ENCODE measurements at regions of chr2 and their contacts with region 1.

Region 1: GRCh38 chr2:145356056-145356455 is 836.1 kb upstream of the ZEB2 start:
- DNase-seq: no peak
- H3K4me3 ChIP-seq: no peak overlapping the region
- H3K27ac ChIP-seq: no peak overlapping the region
- H3K4me1 ChIP-seq: no peaks in the 10 kb centered on the region
- H3K27me3 ChIP-seq: no peaks in the 10 kb centered on the region
- CTCF ChIP-seq: no peak

Region 2: GRCh38 chr2:144833075-144833637 is 522.9 kb before region 1 on chr2:
- CTCF ChIA-PET with region 1: interaction called, 11 read pairs
- POLR2A ChIA-PET with region 1: no interaction called
- intact Hi-C with region 1: no loop called
- DNase-seq: no peak
- H3K4me3 ChIP-seq: no peak overlapping the region
- H3K27ac ChIP-seq: no peak overlapping the region
- H3K4me1 ChIP-seq: peaks cover 13% of the 10 kb centered on the region
- H3K27me3 ChIP-seq: no peaks in the 10 kb centered on the region
- CTCF ChIP-seq: no peak

Region 3: DNA sequence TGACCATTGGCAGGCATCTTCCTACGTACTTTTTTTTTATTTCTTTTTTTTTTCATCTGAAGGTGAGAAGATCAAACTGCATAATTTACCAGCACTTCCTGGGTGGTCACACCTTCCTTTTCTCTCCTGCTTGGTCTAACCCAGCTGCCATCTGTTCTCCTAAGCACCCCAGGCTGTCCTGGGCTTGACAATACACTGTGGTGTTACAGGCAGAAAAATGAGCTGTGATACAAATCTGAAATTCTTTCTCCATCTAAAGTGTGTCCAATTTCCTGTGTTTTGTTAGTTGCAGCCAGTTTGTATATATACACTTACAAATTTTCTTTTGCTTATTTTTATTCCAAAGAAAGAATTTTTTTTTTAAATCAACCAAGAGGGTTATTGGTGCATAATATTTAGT is 50.2 kb before region 1 on chr2:
- CTCF ChIA-PET with region 1: no interaction called
- POLR2A ChIA-PET with region 1: no interaction called
- intact Hi-C with region 1: no loop called
- DNase-seq: no peak
- H3K4me3 ChIP-seq: no peak overlapping the region
- H3K27ac ChIP-seq: no peak overlapping the region
- H3K4me1 ChIP-seq: no peaks in the 10 kb centered on the region
- H3K27me3 ChIP-seq: no peaks in the 10 kb centered on the region
- CTCF ChIP-seq: no peak

Measured in PC-9 (cell line).